Ovary (tissue), 10 donors: ENCODE measurements at regions of chr3 and their contacts with region 1.

Region 1: GRCh38 chr3:14391033-14391432 is 11.4 kb upstream of the SLC6A6 start:
- DNase-seq: peak; percentile 56 to 65 (median 60)
- H3K4me3 ChIP-seq: no peak overlapping the region
- H3K27ac ChIP-seq: peak overlapping the region in 1 of 2 donors; percentile 21
- H3K4me1 ChIP-seq: peaks cover 13% of the 10 kb centered on the region
- H3K27me3 ChIP-seq: no peaks in the 10 kb centered on the region
- CTCF ChIP-seq: no peak
- EP300 ChIP-seq: no peak
- POLR2A ChIP-seq: no peak

Region 2: GRCh38 chr3:12423918-12424630 is 1967.0 kb before region 1 on chr3:
- intact Hi-C with region 1: no loop called
- DNase-seq: no peak
- H3K4me3 ChIP-seq: no peak overlapping the region
- H3K27ac ChIP-seq: no peak overlapping the region
- H3K4me1 ChIP-seq: peaks cover 22% of the 10 kb centered on the region
- H3K27me3 ChIP-seq: no peaks in the 10 kb centered on the region
- CTCF ChIP-seq: no peak
- EP300 ChIP-seq: no peak
- POLR2A ChIP-seq: no peak

Region 3: GRCh38 chr3:14289590-14290461 is 101.2 kb before region 1 on chr3:
- intact Hi-C with region 1: loop called in 1 of 4 experiments (anchors 10 kb)
- DNase-seq: peak in 2 of 5 donors; percentile 47 to 66
- H3K4me3 ChIP-seq: no peak overlapping the region
- H3K27ac ChIP-seq: peak overlapping the region in 1 of 2 donors; percentile 61
- H3K4me1 ChIP-seq: peaks cover 10% of the 10 kb centered on the region
- H3K27me3 ChIP-seq: no peaks in the 10 kb centered on the region
- CTCF ChIP-seq: no peak
- EP300 ChIP-seq: no peak
- POLR2A ChIP-seq: no peak